Lower lobe of right lung (tissue), 2 donors: ENCODE measurements at regions of chr12 and their contacts with region 1.

Region 1: DNA sequence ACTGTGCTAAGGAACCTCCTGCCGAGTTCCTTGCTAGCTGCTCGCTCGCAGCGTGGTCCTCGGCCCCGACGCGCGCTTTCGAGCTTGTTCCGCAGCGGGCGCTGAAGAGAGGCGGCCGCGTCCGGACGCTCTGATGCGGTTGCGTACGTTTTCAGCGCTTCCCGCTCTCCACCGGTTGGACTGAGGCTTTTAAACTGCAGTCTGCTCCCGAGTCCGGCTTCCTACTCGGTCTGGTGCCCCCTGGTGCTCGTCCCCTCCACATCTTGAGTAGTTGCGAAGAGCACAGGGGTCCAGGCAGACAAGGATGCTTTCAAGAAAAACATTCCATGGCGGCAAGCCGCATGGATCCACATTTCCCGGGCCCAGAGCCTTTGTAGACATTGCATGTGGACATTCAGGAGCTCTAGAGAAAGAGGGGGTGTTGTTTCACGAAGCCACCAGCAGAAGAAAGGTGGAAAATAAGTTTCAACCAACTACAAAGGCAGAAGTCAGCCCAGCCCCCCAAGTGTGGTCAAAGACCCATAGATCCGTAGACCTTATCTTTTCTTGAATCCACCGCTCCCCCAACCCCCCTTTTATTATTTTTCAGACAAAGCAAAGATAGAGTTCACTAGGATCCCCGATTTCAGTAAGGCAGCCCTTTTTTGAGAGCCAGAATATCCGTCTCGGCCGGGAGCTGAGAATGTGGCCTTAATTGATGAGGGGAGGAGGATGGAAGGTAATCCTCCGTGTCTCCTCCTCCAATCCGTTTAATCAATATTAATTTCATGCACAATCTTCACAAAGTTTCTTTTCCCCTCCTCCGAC is 984 bp upstream of the WNK1 start:
- DNase-seq: peak; percentile 95
- ATAC-seq: peak; percentile 72 to 81
- H3K4me3 ChIP-seq: peak overlapping the region; percentile 87
- H3K27ac ChIP-seq: peak overlapping the region; percentile 79
- H3K4me1 ChIP-seq: peaks cover 27% of the 10 kb centered on the region
- H3K27me3 ChIP-seq: no peaks in the 10 kb centered on the region
- CTCF ChIP-seq: peak; percentile 63

Region 2: GRCh38 chr12:575948-576612 is 175.3 kb before region 1 on chr12:
- intact Hi-C with region 1: loop called (anchors 10 kb)
- DNase-seq: peak; percentile 89
- ATAC-seq: peak; percentile 90 to 93
- H3K4me3 ChIP-seq: peak overlapping the region; percentile 24
- H3K27ac ChIP-seq: peak overlapping the region; percentile 57
- H3K4me1 ChIP-seq: peaks cover 31% of the 10 kb centered on the region
- H3K27me3 ChIP-seq: no peaks in the 10 kb centered on the region
- CTCF ChIP-seq: peak; percentile 100

Region 3: DNA sequence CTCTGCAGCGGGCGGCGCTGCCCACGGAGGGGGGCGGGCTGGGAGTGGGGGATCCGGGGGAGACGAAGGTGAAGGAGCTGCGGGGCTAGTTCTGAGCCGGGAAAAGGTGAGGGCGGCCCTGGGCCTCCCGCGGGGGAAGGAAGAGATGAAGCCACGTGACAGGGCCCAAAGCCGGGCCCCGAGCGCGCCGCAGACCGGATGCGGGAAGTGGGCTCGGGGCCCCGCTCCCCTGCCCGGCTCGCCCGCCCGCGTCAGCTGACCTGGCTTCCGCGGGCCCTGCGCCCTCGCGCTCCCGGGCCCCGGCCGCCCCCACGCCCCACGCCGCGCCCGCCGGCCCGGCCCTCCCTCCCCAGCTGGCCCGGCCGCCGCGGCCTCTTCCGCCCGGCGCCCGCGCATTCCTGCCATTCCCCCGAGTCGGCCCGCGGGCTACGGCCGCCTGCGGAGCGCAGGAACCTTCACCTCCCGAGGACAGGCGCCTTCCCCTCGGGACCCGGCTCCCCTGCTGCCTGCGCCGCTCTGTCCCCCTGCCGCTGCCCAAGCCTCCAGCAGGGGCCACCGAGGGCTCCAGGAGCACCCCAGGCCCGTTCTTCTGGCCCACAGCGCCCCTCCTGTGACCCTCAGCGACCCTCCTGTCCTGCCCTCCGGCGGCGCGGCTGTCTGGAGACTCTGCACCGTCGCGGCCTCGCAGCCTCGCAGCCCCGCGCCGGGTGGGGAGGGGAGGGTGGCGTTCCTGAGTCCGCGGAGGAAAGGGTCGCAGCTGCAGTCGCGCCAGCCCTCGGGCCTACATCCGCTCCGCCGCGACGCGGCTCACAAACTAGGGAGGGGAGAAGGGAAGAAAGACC is 108.5 kb before region 1 on chr12:
- intact Hi-C with region 1: loop called (anchors 10 kb)
- DNase-seq: peak; percentile 90
- ATAC-seq: peak; percentile 74 to 91
- H3K4me3 ChIP-seq: peak overlapping the region; percentile 69
- H3K27ac ChIP-seq: peak overlapping the region; percentile 99
- H3K4me1 ChIP-seq: peaks cover 79% of the 10 kb centered on the region
- H3K27me3 ChIP-seq: no peaks in the 10 kb centered on the region
- CTCF ChIP-seq: peak; percentile 40

Region 4: GRCh38 chr12:848173-848865 is 96.9 kb after region 1 on chr12:
- intact Hi-C with region 1: no loop called
- DNase-seq: no peak
- ATAC-seq: no peak
- H3K4me3 ChIP-seq: no peak overlapping the region
- H3K27ac ChIP-seq: no peak overlapping the region
- H3K4me1 ChIP-seq: peaks cover 15% of the 10 kb centered on the region
- H3K27me3 ChIP-seq: no peaks in the 10 kb centered on the region
- CTCF ChIP-seq: no peak

Region 5: DNA sequence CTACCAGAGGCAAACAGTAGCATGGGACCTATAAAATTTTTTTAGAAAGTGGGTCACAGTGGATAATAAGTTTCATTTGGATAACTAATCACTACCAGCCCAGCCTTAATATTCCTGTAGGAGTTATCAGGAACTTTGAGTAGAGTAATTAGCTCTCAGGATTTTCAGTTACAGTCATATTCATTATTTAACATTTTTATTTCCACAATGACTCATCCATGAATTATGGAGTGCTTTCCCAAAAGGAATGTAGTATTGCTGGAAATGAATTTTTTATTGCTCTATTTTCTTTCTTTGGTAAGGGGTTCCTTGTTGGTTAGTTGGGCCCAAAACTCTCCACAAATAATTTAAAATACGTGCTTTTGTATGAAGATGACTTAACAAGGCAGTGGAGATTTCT is 293.3 kb after region 1 on chr12:
- intact Hi-C with region 1: no loop called
- DNase-seq: no peak
- ATAC-seq: no peak
- H3K4me3 ChIP-seq: no peak overlapping the region
- H3K27ac ChIP-seq: no peak overlapping the region
- H3K4me1 ChIP-seq: peaks cover 28% of the 10 kb centered on the region
- H3K27me3 ChIP-seq: no peaks in the 10 kb centered on the region
- CTCF ChIP-seq: no peak